ENCODE measurements at regions of chr7 and their contacts with region 1.

Region 1: DNA sequence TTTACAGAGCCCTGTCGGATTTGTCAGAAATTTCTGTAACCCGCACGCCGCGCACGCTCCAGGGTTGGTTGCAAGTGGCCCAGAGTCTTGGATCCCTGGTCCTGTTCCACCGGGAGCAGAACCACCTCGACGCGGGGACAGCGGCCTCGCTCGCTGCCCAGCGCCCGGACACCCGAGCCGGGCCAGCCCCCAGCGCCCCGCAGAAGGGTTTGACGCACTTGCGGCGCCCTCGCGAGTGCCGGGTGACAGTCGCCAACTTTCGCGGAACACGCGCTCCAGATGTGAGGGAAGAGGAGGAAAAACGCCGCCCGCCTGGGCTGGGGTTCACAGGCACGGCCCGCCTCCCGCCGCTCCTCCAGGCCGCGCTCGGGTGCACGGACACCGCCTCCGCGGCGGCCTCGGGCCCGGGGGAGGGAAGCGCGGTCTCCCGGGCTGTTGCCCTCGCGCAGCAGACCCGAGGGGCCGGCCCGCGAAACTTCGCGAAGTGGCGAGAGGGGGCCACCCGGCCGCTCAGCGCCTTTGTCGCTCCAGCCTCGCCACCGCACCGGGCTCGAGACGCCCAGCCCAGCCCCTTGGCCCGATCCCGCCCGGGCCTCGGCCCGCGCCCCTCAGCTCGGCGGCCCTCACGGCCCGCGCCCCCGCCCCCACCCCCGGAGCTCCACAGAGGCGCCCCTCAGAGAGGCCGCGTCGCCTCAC is 514 bp downstream of the RNF216 start:
- DNase-seq: peak; percentile 58
- CTCF ChIP-seq: no peak

Region 2: DNA sequence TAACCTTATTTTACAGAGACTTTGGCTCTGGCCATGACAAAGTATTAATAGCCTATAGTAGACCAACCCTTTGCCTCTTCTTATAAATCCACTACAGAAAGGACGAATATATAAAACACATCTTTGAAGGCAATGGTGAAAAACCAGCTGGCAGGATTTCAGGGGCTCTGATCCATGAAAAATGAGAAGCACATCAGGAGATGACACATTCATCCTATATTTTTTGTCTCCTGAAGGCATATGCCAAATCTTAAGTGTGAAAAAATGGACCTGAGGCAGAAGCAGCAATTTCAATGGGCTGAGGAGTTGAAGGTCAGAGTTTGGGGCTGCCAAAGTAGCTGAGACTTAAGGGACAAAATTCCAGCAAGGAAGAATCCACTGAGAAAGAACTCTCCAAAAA is 13.9 kb before region 1 on chr7:
- CTCF ChIA-PET with region 1: interaction called, 22 read pairs
- POLR2A ChIA-PET with region 1: interaction called, 3 read pairs
- DNase-seq: no peak
- CTCF ChIP-seq: no peak

Region 3: DNA sequence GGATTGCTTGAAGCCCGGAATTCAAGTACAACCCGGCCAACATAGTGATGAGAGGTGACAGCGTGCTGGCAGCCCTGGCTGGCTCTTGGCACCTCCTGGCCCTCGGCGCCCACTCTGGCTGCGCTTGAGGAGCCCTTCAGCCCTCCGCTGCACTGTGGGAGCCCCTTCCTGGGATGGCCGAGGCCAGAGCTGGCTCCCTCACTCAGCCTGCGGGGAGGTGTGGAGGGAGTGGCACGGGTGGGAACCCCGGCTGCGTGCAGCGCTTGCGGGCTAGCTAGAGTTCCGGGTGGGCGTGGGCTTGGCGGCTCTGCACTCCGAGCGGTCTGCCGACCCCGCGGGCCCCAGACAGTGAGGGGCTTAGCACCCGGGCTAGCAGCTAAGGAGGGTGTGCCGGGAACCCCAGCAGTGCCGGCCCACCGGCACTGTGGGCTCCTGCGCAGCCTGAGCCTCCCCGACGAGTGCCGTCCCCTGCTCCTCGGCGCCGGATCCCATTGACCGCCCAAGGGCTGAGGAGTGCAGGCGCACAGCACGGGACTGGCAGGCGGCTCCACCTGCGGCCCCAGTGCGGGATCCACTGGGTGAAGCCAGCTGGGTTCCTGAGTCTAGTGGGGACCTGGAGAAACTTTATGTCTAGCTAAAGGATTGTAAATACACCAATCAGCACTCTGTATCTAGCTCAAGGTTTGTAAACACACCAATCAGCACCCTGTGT is 12.6 kb after region 1 on chr7:
- CTCF ChIA-PET with region 1: interaction called, 15 read pairs
- POLR2A ChIA-PET with region 1: no interaction called
- DNase-seq: no peak
- CTCF ChIP-seq: no peak